ENCODE measurements at regions of chrX and their contacts with region 1.

Region 1: DNA sequence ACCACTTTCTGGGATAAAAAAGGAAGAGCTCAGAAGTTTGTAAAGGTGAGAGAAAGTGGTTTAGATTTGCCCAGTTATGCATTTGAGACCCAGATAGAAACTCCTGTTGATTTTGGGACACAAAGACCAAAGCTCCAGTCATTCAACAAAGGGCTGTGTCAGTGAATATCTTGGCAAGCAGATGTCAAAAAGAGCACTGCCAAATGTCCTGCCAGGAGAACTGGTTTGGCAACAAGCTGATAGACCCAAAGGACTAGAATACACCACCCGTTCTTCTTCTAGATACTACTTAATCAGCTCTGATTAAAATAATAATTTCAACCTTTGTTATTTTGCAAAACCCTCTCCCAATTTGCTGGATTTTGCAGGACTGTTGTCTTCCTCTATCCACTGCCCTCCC is 121.4 kb downstream of the NHS start:
- DNase-seq: no peak
- H3K4me3 ChIP-seq: no peak overlapping the region
- H3K27ac ChIP-seq: no peak overlapping the region
- H3K4me1 ChIP-seq: no peaks in the 10 kb centered on the region
- H3K27me3 ChIP-seq: peaks cover 29% of the 10 kb centered on the region
- CTCF ChIP-seq: no peak

Region 2: GRCh38 chrX:17369309-17369708 is 127.1 kb before region 1 on chrX:
- CTCF ChIA-PET with region 1: no interaction called
- POLR2A ChIA-PET with region 1: no interaction called
- intact Hi-C with region 1: no loop called
- DNase-seq: peak; percentile 34
- H3K4me3 ChIP-seq: no peak overlapping the region
- H3K27ac ChIP-seq: no peak overlapping the region
- H3K4me1 ChIP-seq: no peaks in the 10 kb centered on the region
- H3K27me3 ChIP-seq: peaks cover 60% of the 10 kb centered on the region
- CTCF ChIP-seq: no peak

Region 3: DNA sequence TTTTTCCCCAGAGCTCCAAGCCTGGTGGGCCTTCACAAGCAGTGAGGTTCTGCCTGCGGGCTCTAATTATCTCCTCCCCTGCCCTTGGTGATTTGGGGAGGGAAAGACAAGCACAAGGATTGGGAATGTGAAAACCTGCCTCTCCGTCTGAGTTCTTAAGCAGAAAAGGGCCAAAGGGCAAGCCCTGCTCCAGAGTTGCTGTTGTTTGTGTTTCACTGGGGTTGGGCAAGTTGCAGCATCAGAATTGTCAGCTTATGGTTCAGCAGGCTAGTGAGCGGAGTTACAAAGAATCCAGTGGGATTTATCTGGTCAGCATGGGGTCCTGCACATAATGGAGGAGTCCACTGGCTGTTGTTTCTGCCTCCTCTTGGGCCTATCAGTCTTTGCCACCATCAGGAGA is 60.9 kb before region 1 on chrX:
- CTCF ChIA-PET with region 1: no interaction called
- POLR2A ChIA-PET with region 1: no interaction called
- intact Hi-C with region 1: loop called (anchors 10 kb)
- DNase-seq: no peak
- H3K4me3 ChIP-seq: no peak overlapping the region
- H3K27ac ChIP-seq: no peak overlapping the region
- H3K4me1 ChIP-seq: no peaks in the 10 kb centered on the region
- H3K27me3 ChIP-seq: peaks cover 7% of the 10 kb centered on the region
- CTCF ChIP-seq: no peak

Region 4: DNA sequence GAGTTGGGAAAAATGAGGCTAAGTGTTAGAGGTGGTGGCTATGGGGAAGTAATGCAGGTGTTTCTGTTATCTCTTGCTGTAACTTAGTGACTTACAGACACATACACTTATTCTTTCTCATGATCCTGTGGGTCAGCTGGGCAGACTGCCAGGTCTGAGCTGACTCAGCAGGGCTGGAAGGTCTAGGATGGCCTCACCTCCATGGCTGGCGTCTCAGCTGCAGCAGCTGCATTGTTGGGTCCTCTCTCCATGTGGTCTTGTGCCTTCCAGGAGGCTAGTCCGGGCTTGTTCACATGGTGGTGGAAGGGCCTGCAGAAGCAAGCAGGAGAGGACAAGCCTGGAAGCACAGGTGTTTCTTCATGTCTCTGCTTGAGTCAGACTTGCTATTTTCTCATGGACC is 51.3 kb after region 1 on chrX:
- CTCF ChIA-PET with region 1: no interaction called
- POLR2A ChIA-PET with region 1: no interaction called
- intact Hi-C with region 1: no loop called
- DNase-seq: no peak
- H3K4me3 ChIP-seq: no peak overlapping the region
- H3K27ac ChIP-seq: no peak overlapping the region
- H3K4me1 ChIP-seq: no peaks in the 10 kb centered on the region
- H3K27me3 ChIP-seq: peaks cover 14% of the 10 kb centered on the region
- CTCF ChIP-seq: no peak